ENCODE measurements at regions of chr16 and their contacts with region 1.

Region 1: DNA sequence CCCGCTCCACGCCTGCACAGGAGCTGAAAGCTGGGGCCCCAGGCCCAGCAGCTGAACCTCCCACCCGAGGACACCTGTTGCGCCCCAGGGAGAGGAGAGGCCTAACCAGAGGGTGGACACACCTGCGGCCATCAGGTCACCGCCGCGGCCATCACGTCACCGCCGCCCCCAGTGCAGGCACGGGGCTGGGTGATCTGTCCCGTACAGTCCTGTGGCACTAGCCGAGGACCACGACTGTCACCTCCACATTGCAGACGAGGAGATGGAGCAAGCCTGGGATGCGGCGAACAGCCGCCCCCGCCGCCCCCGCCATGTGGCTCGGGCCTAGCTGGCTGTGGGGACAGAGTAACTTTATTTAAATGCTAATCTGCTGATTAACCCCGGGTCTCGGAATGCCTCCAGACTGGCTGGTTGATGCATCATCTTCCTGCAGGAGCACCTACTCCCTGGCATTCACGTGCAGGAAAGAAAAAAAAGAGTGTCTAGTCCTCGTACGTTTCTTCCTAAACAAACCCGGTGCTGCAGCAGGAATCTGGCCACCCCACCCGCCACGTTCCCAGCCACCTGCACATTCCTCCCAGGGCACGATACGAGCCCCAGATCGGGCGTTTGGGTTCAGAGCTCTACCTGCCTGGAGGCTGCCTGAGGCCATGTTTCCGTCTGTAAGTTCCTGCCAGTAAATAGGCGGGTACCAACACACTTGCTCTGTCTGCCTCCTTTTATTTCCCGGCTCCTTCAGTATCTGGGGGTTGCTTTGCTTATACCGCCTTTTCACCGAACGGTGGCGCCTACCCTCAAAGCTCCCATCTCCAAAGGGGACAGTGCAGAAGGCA is 29.9 kb downstream of the PIEZO1 start:
- DNase-seq: peak in 3 of 5 donors; percentile 30 to 38 (median 31)
- H3K4me3 ChIP-seq: no peak overlapping the region
- H3K4me3 Mint-ChIP-seq: no peak overlapping the region
- H3K27ac ChIP-seq: no peak overlapping the region
- H3K27ac Mint-ChIP-seq: peak overlapping the region; percentile 29 to 81 (median 74)
- H3K4me1 ChIP-seq: peaks cover 35% of the 10 kb centered on the region
- H3K4me1 Mint-ChIP-seq: peaks cover 17 to 43% (median 24%) of the 10 kb centered on the region in 4 donors
- H3K27me3 ChIP-seq: no peaks in the 10 kb centered on the region
- H3K27me3 Mint-ChIP-seq: no peaks in the 10 kb centered on the region

Region 2: GRCh38 chr16:88743693-88744576 is 11.2 kb before region 1 on chr16:
- CTCF ChIA-PET with region 1: interaction called, 40 read pairs
- POLR2A ChIA-PET with region 1: interaction called, 19 read pairs
- intact Hi-C with region 1: loop called (anchors 1 kb)
- DNase-seq: peak; percentile 65 to 76 (median 69)
- H3K4me3 ChIP-seq: no peak overlapping the region
- H3K4me3 Mint-ChIP-seq: peak overlapping the region in 4 of 8 donors; percentile 16 to 49 (median 30)
- H3K27ac ChIP-seq: no peak overlapping the region
- H3K27ac Mint-ChIP-seq: peak overlapping the region in 4 of 7 donors; percentile 7 to 52 (median 36)
- H3K4me1 ChIP-seq: peaks cover 41% of the 10 kb centered on the region
- H3K4me1 Mint-ChIP-seq: peaks cover 9 to 41% (median 22%) of the 10 kb centered on the region in 4 donors
- H3K27me3 ChIP-seq: no peaks in the 10 kb centered on the region
- H3K27me3 Mint-ChIP-seq: no peaks in the 10 kb centered on the region

Region 3: DNA sequence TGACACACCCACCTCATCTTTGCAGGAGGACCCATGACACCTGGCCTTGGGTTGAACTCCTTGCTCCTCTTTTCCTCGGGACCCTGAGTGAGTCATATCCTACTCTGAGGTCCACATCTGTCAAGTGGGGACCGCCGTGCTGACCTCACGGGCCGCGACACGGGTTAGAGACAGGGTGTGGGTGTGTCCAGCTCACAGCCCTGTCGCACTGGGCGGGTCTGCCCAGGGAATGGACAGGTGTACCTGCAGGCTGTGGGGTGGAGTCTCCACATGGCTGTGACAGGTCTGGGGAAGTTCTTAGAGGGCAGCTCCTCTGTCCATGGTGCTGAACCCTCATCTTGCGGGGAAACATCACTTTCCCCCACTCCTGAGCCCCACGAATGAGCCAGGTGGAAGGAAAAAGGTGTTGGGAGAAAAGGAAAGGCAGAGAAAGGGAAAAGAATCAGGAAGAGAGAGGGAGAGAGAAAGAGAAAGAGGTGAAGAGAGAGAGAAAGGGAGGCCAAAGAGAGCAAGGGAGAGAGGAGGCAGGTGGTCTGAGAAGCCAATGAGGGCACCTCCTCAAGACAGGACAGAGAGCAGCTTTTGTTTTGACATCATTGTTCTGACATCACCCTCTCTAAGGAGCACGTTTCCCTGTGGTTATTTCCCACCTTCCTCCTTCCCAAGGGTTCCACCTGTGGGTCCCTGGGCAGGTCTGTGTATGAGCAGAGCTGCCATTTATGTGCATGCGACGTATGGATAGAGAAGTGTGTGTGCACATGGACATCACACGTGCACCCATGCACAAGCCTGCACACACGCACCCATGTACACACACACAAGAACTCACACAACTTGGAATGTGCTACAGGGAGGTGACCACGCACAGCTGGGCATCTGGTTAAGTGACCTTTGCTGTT is 254.4 kb after region 1 on chr16:
- CTCF ChIA-PET with region 1: no interaction called
- POLR2A ChIA-PET with region 1: no interaction called
- intact Hi-C with region 1: no loop called
- DNase-seq: peak in 4 of 5 donors; percentile 12 to 38 (median 26)
- H3K4me3 ChIP-seq: no peak overlapping the region
- H3K4me3 Mint-ChIP-seq: no peak overlapping the region
- H3K27ac ChIP-seq: no peak overlapping the region
- H3K27ac Mint-ChIP-seq: peak overlapping the region in 2 of 7 donors; percentile 41 to 45
- H3K4me1 ChIP-seq: no peaks in the 10 kb centered on the region
- H3K4me1 Mint-ChIP-seq: peaks cover 0 to 6% (median 2%) of the 10 kb centered on the region in 4 donors
- H3K27me3 ChIP-seq: no peaks in the 10 kb centered on the region
- H3K27me3 Mint-ChIP-seq: peaks cover 18 to 26% of the 10 kb centered on the region in 2 donors